HepG2 (cell line): ENCODE measurements at regions of chr10 and their contacts with region 1.

Region 1: GRCh38 chr10:122307669-122308486 is 36.8 kb downstream of the BTBD16 start:
- DNase-seq: no peak
- ATAC-seq: no peak
- H3K4me3 ChIP-seq: no peak overlapping the region
- H3K27ac ChIP-seq: peak overlapping the region; percentile 95
- H3K4me1 ChIP-seq: peaks cover 96% of the 10 kb centered on the region
- H3K27me3 ChIP-seq: no peaks in the 10 kb centered on the region
- CTCF ChIP-seq: no peak
- EP300 ChIP-seq: peak in 1 of 2 experiments; percentile 36; a peak in 1 of 4 replicates
- POLR2A ChIP-seq: no peak
- RAD21 ChIP-seq: no peak

Region 2: GRCh38 chr10:122044045-122044661 is 263.7 kb before region 1 on chr10:
- CTCF ChIA-PET with region 1: no interaction called
- POLR2A ChIA-PET with region 1: no interaction called
- in situ Hi-C with region 1: no loop called
- intact Hi-C with region 1: no loop called
- DNase-seq: peak; percentile 76
- ATAC-seq: peak; percentile 75
- H3K4me3 ChIP-seq: peak overlapping the region in 2 of 3 experiments; percentile 13; a peak in 2 of 6 replicates
- H3K27ac ChIP-seq: peak overlapping the region; percentile 62
- H3K4me1 ChIP-seq: peaks cover 85% of the 10 kb centered on the region
- H3K27me3 ChIP-seq: no peaks in the 10 kb centered on the region
- CTCF ChIP-seq: no peak
- EP300 ChIP-seq: no peak
- POLR2A ChIP-seq: no peak
- RAD21 ChIP-seq: no peak

Region 3: DNA sequence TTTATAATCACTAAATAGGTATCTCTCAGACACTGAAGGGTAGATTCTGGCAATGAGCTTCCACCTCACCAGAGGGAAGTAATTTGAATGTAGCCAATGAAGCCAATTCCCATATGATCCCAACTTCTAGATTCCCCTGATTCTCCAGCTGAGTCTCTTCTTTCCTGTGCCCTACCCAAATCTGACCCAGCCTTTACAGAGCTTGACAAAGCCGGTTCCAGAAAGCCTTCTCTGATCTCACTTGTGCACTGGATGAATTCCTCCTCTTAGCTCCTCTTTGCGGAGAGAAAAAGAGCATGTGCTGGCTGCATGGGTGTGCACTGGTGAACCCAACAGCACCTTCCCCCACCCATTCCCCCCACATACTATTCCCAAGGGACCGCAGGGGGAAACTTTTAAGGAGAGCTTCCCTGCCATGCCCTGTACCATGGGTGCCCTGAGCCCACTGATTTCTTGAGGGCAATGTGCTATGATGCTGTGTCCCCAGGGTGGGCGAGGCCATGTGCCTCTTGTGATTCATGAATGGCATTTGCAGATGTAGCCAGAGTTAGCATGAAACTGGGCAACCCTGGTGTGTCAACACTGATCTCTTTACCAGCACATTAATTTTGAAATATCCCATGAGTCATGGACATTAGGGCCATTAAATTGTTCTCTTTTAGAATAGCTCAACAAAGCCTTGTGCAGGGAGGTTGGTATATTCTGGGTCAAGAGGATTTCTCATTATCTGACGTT is 16.2 kb after region 1 on chr10:
- CTCF ChIA-PET with region 1: no interaction called
- POLR2A ChIA-PET with region 1: interaction called, 141 read pairs
- in situ Hi-C with region 1: no loop called
- intact Hi-C with region 1: no loop called
- DNase-seq: no peak
- ATAC-seq: no peak
- H3K4me3 ChIP-seq: no peak overlapping the region
- H3K27ac ChIP-seq: no peak overlapping the region
- H3K4me1 ChIP-seq: peaks cover 22% of the 10 kb centered on the region
- H3K27me3 ChIP-seq: no peaks in the 10 kb centered on the region
- CTCF ChIP-seq: no peak
- EP300 ChIP-seq: no peak
- POLR2A ChIP-seq: no peak
- RAD21 ChIP-seq: no peak

Region 4: DNA sequence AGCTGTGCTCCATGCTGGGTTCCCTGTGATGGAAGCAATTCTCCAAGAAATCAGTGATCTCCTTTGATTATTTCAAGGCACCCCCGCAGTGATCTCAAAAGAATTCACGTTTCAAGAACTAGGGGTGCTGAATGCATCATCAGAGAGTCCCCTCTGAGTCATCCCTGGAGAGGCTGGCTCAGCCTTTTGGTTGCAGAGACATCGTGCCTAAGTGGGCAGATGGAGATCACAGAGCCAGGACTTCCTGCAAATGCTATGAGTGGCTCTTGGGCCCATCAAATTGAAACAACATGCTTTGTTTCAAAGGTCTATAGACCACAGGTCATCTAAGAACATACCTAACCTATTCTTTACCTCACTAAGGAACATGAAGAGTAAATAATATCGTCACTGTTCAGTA is 25.2 kb after region 1 on chr10:
- CTCF ChIA-PET with region 1: no interaction called
- POLR2A ChIA-PET with region 1: interaction called, 141 read pairs
- in situ Hi-C with region 1: no loop called
- intact Hi-C with region 1: loop called (anchors 1 kb)
- DNase-seq: no peak
- ATAC-seq: no peak
- H3K4me3 ChIP-seq: peak overlapping the region in 1 of 3 experiments; percentile 3; a peak in 1 of 6 replicates
- H3K27ac ChIP-seq: peak overlapping the region; percentile 24
- H3K4me1 ChIP-seq: peaks cover 44% of the 10 kb centered on the region
- H3K27me3 ChIP-seq: no peaks in the 10 kb centered on the region
- CTCF ChIP-seq: no peak
- EP300 ChIP-seq: no peak
- POLR2A ChIP-seq: no peak
- RAD21 ChIP-seq: no peak

Region 5: DNA sequence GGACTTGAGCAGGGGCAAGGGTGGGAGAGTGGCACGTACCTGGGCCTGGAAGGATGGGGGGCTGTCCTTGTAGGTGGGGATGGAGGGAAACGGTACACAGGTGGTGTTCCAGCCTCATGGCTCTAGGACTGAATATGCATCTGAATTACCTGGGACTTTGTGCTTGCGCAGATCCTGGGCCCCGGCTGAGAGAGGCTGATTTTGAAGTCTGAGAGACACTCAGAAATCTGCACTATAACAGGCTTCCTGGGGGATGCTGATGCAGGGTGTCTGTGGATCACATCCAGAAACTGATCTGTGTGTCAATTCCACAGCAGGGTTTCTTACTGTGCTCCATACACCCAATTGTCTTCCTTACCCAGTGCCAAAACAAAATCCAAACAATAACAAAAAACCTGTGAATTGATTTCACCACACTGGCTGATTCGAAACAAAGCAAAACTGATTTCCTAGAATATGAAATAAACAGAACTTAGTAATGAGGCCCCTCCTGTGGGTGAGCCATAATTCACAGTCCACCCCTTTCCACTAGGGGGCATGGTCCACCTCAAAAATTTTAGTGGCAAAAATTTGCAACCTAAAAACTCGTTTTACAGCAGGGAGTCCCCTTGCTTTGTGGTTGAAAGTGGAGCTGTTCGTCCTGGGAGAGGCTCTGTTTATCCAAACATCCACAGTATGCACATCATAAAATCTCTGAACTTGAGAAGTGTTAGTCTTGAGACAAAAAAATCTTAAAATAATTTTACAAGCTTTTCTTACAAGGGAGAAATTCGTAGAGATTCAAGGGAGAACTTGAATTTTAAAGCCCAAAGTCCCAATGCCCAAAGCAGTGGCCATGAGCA is 34.6 kb after region 1 on chr10:
- CTCF ChIA-PET with region 1: no interaction called
- POLR2A ChIA-PET with region 1: interaction called, 38 read pairs
- in situ Hi-C with region 1: no loop called
- intact Hi-C with region 1: no loop called
- DNase-seq: peak; percentile 54
- ATAC-seq: peak; percentile 64
- H3K4me3 ChIP-seq: no peak overlapping the region
- H3K27ac ChIP-seq: no peak overlapping the region
- H3K4me1 ChIP-seq: peaks cover 44% of the 10 kb centered on the region
- H3K27me3 ChIP-seq: no peaks in the 10 kb centered on the region
- CTCF ChIP-seq: peak; percentile 71
- EP300 ChIP-seq: no peak
- POLR2A ChIP-seq: no peak
- RAD21 ChIP-seq: peak; percentile 81

Region 6: DNA sequence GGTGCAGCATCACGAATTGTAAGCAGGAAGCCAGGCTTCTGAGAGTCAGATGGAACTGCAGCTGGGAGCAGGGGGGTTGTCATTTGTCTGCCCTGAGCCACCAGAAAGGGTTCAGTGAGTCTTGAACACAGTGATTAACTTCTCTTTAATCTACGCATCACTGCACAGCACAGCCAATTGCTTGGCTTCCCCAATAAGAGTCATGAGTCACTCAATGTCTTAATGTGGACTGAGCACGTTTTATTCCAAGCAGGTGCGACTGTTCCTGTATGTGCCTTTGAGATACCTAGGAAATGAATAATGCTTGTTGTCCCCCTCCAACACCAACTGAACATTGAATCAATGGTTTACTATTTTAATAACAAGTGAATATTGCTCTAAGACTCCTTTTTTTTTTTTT is 40.6 kb after region 1 on chr10:
- CTCF ChIA-PET with region 1: no interaction called
- POLR2A ChIA-PET with region 1: interaction called, 38 read pairs
- in situ Hi-C with region 1: no loop called
- intact Hi-C with region 1: no loop called
- DNase-seq: no peak
- ATAC-seq: no peak
- H3K4me3 ChIP-seq: no peak overlapping the region
- H3K27ac ChIP-seq: peak overlapping the region; percentile 60
- H3K4me1 ChIP-seq: peaks cover 78% of the 10 kb centered on the region
- H3K27me3 ChIP-seq: no peaks in the 10 kb centered on the region
- CTCF ChIP-seq: no peak
- EP300 ChIP-seq: no peak
- POLR2A ChIP-seq: no peak
- RAD21 ChIP-seq: no peak

Region 7: GRCh38 chr10:122374237-122374869 is 66.5 kb after region 1 on chr10 and contains the start of gene PLEKHA1:
- CTCF ChIA-PET with region 1: no interaction called
- POLR2A ChIA-PET with region 1: interaction called, 53 read pairs
- in situ Hi-C with region 1: no loop called
- intact Hi-C with region 1: loop called (anchors 2 kb)
- DNase-seq: peak; percentile 84
- ATAC-seq: peak; percentile 95
- H3K4me3 ChIP-seq: peak within 1 kb of the TSS; percentile 86 to 89 (median 87)
- H3K27ac ChIP-seq: peak within 1 kb of the TSS; percentile 82
- H3K4me1 ChIP-seq: peaks cover 61% of the 10 kb centered on the region
- H3K27me3 ChIP-seq: peaks cover 0 to 6% of the 10 kb centered on the region in 2 experiments; a peak in 1 of 5 replicates
- CTCF ChIP-seq: 0 out of 2 replicates have a peak, but pooled peaks have one; percentile 4
- EP300 ChIP-seq: no peak
- POLR2A ChIP-seq: peak in 1 of 2 experiments; percentile 70; a peak in 2 of 4 replicates
- RAD21 ChIP-seq: no peak
- total RNA-seq, gene PLEKHA1: 30.8 and 32.2 TPM in 2 replicates